Right ventricle myocardium superior (tissue), 1 donor: ENCODE measurements at regions of chr14 and their contacts with region 1.

Region 1: GRCh38 chr14:52473557-52473956 is 78.7 kb downstream of the TXNDC16 start:
- DNase-seq: no peak
- ATAC-seq: no peak

Region 2: GRCh38 chr14:52015411-52016030 is 458.0 kb before region 1 on chr14:
- intact Hi-C with region 1: no loop called
- DNase-seq: peak; percentile 60
- ATAC-seq: peak; percentile 36

Region 3: GRCh38 chr14:52299692-52300278 is 173.8 kb before region 1 on chr14:
- intact Hi-C with region 1: loop called (anchors 5 kb)
- DNase-seq: no peak
- ATAC-seq: peak; percentile 77

Region 4: GRCh38 chr14:52547526-52547925 is 74.0 kb after region 1 on chr14:
- intact Hi-C with region 1: no loop called
- DNase-seq: no peak
- ATAC-seq: no peak